ENCODE measurements at regions of chr9 and their contacts with region 1.

Region 1: GRCh38 chr9:15317836-15318235 is 10.8 kb upstream of the TTC39B start:
- DNase-seq: no peak
- ATAC-seq: no peak
- H3K4me3 ChIP-seq: no peak overlapping the region
- H3K27ac ChIP-seq: no peak overlapping the region
- H3K4me1 ChIP-seq: no peaks in the 10 kb centered on the region
- H3K27me3 ChIP-seq: no peaks in the 10 kb centered on the region

Region 2: DNA sequence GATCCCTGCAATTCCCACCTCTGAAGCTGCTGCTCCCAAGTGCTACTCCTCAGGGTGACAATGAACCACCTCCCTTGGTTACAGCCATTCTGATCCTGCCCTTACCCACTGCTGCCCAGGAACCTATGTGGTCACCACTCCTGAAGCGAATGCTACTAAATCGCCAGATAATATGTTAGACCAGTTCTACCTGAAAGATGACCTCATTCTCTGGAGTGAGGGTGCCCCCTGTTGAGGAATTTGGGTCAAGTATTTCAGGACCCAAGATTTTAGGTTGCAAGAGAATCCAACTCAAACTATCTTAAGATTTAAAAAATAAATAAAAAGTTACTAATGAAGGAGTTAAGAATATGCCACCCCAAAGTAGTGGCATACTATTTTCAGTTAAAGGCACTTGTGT is 99.0 kb after region 1 on chr9:
- intact Hi-C with region 1: loop called in 2 of 4 experiments (anchors 10 kb)
- DNase-seq: no peak
- ATAC-seq: peak in 1 of 2 donors; percentile 69
- H3K4me3 ChIP-seq: no peak overlapping the region
- H3K27ac ChIP-seq: no peak overlapping the region
- H3K4me1 ChIP-seq: no peaks in the 10 kb centered on the region
- H3K27me3 ChIP-seq: no peaks in the 10 kb centered on the region

Region 3: GRCh38 chr9:15422372-15423230 is 104.8 kb after region 1 on chr9 and contains the start of gene SNAPC3:
- intact Hi-C with region 1: loop called in 2 of 4 experiments (anchors 10 kb)
- DNase-seq: peak; percentile 94 to 98 (median 98)
- ATAC-seq: peak; percentile 100
- H3K4me3 ChIP-seq: peak within 1 kb of the TSS; percentile 94
- H3K27ac ChIP-seq: peak within 1 kb of the TSS; percentile 92
- H3K4me1 ChIP-seq: peaks cover 4% of the 10 kb centered on the region
- H3K27me3 ChIP-seq: no peaks in the 10 kb centered on the region
- total RNA-seq, gene SNAPC3: 22.4 to 29.6 (median 26.7) TPM